GM12878 (cell line): ENCODE measurements at regions of chr2 and their contacts with region 1.

Region 1: GRCh38 chr2:49236316-49236715 is 82.0 kb upstream of the FSHR start:
- DNase-seq: no peak
- ATAC-seq: no peak
- H3K4me3 ChIP-seq: no peak overlapping the region
- H3K27ac ChIP-seq: no peak overlapping the region
- H3K4me1 ChIP-seq: no peaks in the 10 kb centered on the region
- H3K27me3 ChIP-seq: no peaks in the 10 kb centered on the region
- CTCF ChIP-seq: no peak
- EP300 ChIP-seq: no peak
- POLR2A ChIP-seq: no peak
- RAD21 ChIP-seq: no peak

Region 2: GRCh38 chr2:49189512-49190225 is 46.6 kb before region 1 on chr2:
- CTCF ChIA-PET with region 1: no interaction called
- POLR2A ChIA-PET with region 1: no interaction called
- RAD21 ChIA-PET with region 1: no interaction called
- SMC1A ChIA-PET with region 1: no interaction called
- in situ Hi-C with region 1: no loop called
- intact Hi-C with region 1: loop called (anchors 1 kb)
- DNase-seq: no peak
- ATAC-seq: no peak
- H3K4me3 ChIP-seq: no peak overlapping the region
- H3K27ac ChIP-seq: no peak overlapping the region
- H3K4me1 ChIP-seq: no peaks in the 10 kb centered on the region
- H3K27me3 ChIP-seq: no peaks in the 10 kb centered on the region
- CTCF ChIP-seq: no peak
- EP300 ChIP-seq: no peak
- POLR2A ChIP-seq: no peak
- RAD21 ChIP-seq: no peak